ENCODE measurements at regions of chr4 and their contacts with region 1.

Region 1: GRCh38 chr4:184649026-184649970 is at the starts of genes CASP3 and PRIMPOL:
- DNase-seq: peak; percentile 95 to 97
- H3K4me3 ChIP-seq: peak within 1 kb of the TSS; percentile 63
- H3K4me3 Mint-ChIP-seq: peak within 1 kb of the TSS; percentile 88
- H3K27ac Mint-ChIP-seq: peak within 1 kb of the TSS; percentile 78
- H3K4me1 ChIP-seq: peaks cover 10% of the 10 kb centered on the region
- H3K4me1 Mint-ChIP-seq: peaks cover 14% of the 10 kb centered on the region
- H3K27me3 ChIP-seq: no peaks in the 10 kb centered on the region
- H3K27me3 Mint-ChIP-seq: no peaks in the 10 kb centered on the region
- CTCF ChIP-seq: peak in 1 of 2 experiments; percentile 26
- total RNA-seq, gene CASP3: 34.1 and 34.5 TPM in 2 replicates
- total RNA-seq, gene PRIMPOL: 7.5 and 7.9 TPM in 2 replicates

Region 2: DNA sequence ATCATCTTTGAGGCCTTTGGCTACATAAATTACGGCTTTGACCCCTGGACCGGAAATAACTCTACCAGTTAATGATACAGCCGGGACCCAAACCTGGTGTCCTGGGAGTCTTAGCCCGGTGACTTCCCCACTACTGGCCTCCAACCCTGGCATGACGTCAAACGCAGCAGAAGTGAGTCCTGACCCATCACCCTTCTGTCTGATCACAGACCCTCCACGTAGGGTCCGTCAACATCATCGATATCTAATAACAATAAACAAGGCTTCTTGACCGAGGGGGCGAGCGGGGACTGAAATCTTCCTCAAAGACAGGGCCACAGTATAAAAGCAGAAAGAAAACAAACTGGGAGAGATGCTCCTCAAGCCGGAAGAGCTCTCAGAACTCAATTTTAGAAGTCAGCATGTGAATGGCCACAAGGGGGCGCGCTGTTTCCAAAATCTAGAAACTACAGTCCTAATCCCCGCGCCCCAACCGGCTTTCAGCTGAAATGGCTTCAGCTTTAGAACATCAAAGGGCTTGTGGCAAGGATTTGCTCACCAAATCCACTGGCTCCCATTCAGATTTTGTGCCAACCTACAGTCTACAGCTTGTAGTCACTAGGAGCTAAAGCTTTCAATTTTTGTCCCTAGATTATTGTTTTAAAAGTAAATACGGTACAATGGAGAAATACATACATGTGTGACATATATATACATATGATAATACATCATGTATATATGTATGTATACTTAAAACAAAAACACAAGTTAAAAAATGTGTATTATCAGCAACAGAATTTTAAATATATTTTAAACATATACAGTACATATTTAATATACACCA is 385.2 kb before region 1 on chr4:
- CTCF ChIA-PET with region 1: interaction called, 11 read pairs
- POLR2A ChIA-PET with region 1: interaction called, 5 read pairs
- intact Hi-C with region 1: loop called (anchors 2 kb)
- DNase-seq: peak; percentile 85 to 86
- H3K4me3 ChIP-seq: no peak overlapping the region
- H3K4me3 Mint-ChIP-seq: peak overlapping the region; percentile 13
- H3K27ac Mint-ChIP-seq: no peak overlapping the region
- H3K4me1 ChIP-seq: no peaks in the 10 kb centered on the region
- H3K4me1 Mint-ChIP-seq: peaks cover 14% of the 10 kb centered on the region
- H3K27me3 ChIP-seq: no peaks in the 10 kb centered on the region
- H3K27me3 Mint-ChIP-seq: peaks cover 3% of the 10 kb centered on the region
- CTCF ChIP-seq: peak; percentile 81

Region 3: GRCh38 chr4:184287697-184288255 is 361.5 kb before region 1 on chr4:
- CTCF ChIA-PET with region 1: interaction called, 4 read pairs
- POLR2A ChIA-PET with region 1: no interaction called
- intact Hi-C with region 1: loop called (anchors 2 kb)
- DNase-seq: peak; percentile 82 to 83
- H3K4me3 ChIP-seq: no peak overlapping the region
- H3K4me3 Mint-ChIP-seq: peak overlapping the region; percentile 27
- H3K27ac Mint-ChIP-seq: peak overlapping the region; percentile 62
- H3K4me1 ChIP-seq: peaks cover 18% of the 10 kb centered on the region
- H3K4me1 Mint-ChIP-seq: peaks cover 13% of the 10 kb centered on the region
- H3K27me3 ChIP-seq: no peaks in the 10 kb centered on the region
- H3K27me3 Mint-ChIP-seq: no peaks in the 10 kb centered on the region
- CTCF ChIP-seq: no peak

Region 4: DNA sequence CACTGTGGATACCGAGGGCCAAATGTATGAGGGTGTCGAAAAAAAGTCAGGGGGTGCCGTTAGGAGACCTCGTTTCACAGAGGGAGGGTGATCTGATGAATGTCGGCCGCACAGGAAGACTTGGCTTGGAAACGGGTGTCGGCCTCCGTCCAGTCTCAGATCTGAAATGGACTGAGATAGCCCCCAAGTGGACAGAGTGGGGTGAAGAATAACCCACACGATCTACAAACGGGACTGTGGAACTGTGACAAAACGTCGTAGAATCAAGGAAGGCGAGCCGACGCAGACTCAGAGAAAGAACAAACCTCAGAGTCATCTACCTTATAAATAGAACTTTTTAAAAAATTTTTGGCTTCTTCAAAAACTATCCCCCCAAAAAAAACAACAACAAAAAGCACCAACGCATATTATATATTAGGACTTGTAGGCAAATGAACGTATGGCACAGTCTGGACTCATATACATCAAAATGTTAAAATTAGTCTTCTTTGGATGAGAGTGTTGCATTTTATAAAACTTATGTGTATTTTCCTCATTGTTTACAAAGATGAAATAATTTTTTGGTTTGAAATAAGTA is 111.2 kb before region 1 on chr4:
- CTCF ChIA-PET with region 1: no interaction called
- POLR2A ChIA-PET with region 1: interaction called, 4 read pairs
- intact Hi-C with region 1: loop called (anchors 5 kb)
- DNase-seq: peak; percentile 83
- H3K4me3 ChIP-seq: peak overlapping the region; percentile 39
- H3K4me3 Mint-ChIP-seq: peak overlapping the region; percentile 86
- H3K27ac Mint-ChIP-seq: peak overlapping the region; percentile 90
- H3K4me1 ChIP-seq: peaks cover 16% of the 10 kb centered on the region
- H3K4me1 Mint-ChIP-seq: peaks cover 23% of the 10 kb centered on the region
- H3K27me3 ChIP-seq: no peaks in the 10 kb centered on the region
- H3K27me3 Mint-ChIP-seq: no peaks in the 10 kb centered on the region
- CTCF ChIP-seq: peak; percentile 63 to 67

Region 5: GRCh38 chr4:184733654-184734524 is 84.6 kb after region 1 on chr4 and contains the start of gene CENPU:
- CTCF ChIA-PET with region 1: interaction called, 3 read pairs
- POLR2A ChIA-PET with region 1: interaction called, 17 read pairs
- intact Hi-C with region 1: loop called (anchors 5 kb)
- DNase-seq: peak; percentile 97
- H3K4me3 ChIP-seq: peak within 1 kb of the TSS; percentile 64
- H3K4me3 Mint-ChIP-seq: peak within 1 kb of the TSS; percentile 99
- H3K27ac Mint-ChIP-seq: peak within 1 kb of the TSS; percentile 94
- H3K4me1 ChIP-seq: no peaks in the 10 kb centered on the region
- H3K4me1 Mint-ChIP-seq: no peaks in the 10 kb centered on the region
- H3K27me3 ChIP-seq: no peaks in the 10 kb centered on the region
- H3K27me3 Mint-ChIP-seq: no peaks in the 10 kb centered on the region
- CTCF ChIP-seq: no peak
- total RNA-seq, gene CENPU: 42.8 and 52.0 TPM in 2 replicates

Region 6: GRCh38 chr4:184775854-184776572 is 126.7 kb after region 1 on chr4:
- CTCF ChIA-PET with region 1: no interaction called
- POLR2A ChIA-PET with region 1: no interaction called
- intact Hi-C with region 1: no loop called
- DNase-seq: no peak
- H3K4me3 ChIP-seq: no peak overlapping the region
- H3K4me3 Mint-ChIP-seq: no peak overlapping the region
- H3K27ac Mint-ChIP-seq: no peak overlapping the region
- H3K4me1 ChIP-seq: no peaks in the 10 kb centered on the region
- H3K4me1 Mint-ChIP-seq: no peaks in the 10 kb centered on the region
- H3K27me3 ChIP-seq: no peaks in the 10 kb centered on the region
- H3K27me3 Mint-ChIP-seq: no peaks in the 10 kb centered on the region
- CTCF ChIP-seq: no peak

Region 7: DNA sequence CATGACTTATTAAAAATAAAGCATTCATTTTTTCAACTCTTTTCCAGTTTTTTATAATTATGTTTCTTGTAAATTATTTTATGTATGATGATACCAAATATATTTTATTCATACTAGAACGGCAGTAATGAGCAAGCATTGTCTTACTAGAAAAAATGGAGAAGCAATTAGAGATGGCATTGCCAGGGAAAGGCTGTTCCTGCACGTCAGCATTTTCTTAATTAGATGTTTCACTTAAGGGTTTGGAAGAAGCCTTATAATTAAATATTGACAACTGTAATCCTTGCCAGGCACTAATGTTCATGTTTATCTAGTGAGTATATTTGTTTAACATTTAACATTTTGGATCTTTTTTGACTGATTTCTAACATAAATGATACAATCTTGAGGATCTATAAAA is 1471.8 kb after region 1 on chr4:
- CTCF ChIA-PET with region 1: no interaction called
- POLR2A ChIA-PET with region 1: no interaction called
- intact Hi-C with region 1: no loop called
- DNase-seq: no peak
- H3K4me3 ChIP-seq: no peak overlapping the region
- H3K4me3 Mint-ChIP-seq: no peak overlapping the region
- H3K27ac Mint-ChIP-seq: no peak overlapping the region
- H3K4me1 ChIP-seq: no peaks in the 10 kb centered on the region
- H3K4me1 Mint-ChIP-seq: no peaks in the 10 kb centered on the region
- H3K27me3 ChIP-seq: no peaks in the 10 kb centered on the region
- H3K27me3 Mint-ChIP-seq: no peaks in the 10 kb centered on the region
- CTCF ChIP-seq: no peak